GM23248 (cell line): ENCODE measurements at regions of chr9 and their contacts with region 1.

Region 1: DNA sequence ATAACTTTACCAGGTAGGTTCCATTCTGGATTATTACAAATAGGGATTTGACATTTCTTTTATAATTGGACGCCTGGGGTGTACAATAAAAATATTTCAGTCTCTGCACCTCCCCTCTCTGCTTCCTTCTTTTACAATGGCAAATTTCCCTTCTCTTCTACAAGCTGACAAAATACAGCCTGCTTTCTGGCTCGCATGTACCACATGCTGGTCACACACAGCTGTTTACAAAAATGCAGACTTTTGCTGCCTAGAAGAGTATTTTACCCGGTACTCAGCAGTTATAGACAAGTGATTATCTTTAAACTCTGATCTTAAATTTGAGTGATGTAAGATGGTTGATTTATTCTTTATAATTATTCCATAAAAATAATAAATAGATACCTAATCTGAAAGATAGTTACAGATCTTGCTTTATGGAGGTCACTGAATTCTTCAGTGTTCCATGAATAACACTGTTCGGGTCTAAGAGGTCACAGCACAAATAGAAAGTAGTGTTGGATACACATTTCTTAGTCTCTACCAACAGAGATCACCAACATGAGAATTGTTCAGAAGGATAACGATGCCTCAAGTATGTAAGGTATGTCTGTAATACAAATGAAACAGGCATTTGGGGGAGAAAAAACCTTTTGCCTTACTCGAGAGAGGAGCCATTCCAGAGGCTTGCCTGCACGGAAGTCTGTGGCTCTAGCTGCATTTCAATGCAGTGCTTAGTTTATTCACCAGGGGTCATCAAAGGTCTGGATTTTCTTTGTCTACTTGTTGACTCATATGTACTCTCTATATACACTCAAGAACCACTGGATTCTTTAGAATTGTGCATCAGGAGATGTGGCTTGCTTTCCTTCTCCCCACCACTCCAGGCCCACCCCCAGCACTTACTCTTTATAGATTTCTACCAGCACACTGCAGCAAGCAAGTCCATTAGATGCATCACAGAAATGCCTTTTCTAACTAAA is 206.6 kb upstream of the RFX3 start:
- DNase-seq: peak; percentile 88
- H3K4me3 ChIP-seq: peak overlapping the region; percentile 70
- H3K27ac ChIP-seq: peak overlapping the region; percentile 49
- H3K4me1 ChIP-seq: peaks cover 17% of the 10 kb centered on the region; the same call in 1 of the 2 replicates
- H3K27me3 ChIP-seq: no peaks in the 10 kb centered on the region

Region 2: DNA sequence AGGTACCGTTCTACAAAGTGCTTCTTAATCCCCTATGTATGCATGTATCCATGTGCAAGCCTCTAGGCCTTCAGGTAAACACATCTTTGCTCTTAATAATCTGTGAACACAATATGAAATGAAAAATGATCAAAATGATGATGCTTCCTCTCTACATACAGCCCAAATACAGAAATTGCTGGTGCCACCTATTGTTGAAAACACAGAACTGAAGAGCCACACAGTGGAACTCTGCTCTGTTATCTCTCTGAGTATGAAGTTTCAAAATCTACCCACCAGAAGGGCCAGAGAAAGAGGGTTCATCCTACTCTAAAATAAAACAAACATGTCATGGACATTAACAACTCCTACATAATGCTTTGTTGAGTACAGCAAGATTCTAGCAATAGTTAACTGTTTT is 496.2 kb after region 1 on chr9:
- in situ Hi-C with region 1: loop called (anchors 10 kb)
- DNase-seq: peak; percentile 63
- H3K4me3 ChIP-seq: no peak overlapping the region
- H3K27ac ChIP-seq: no peak overlapping the region
- H3K4me1 ChIP-seq: peaks cover 26% of the 10 kb centered on the region
- H3K27me3 ChIP-seq: no peaks in the 10 kb centered on the region

Region 3: DNA sequence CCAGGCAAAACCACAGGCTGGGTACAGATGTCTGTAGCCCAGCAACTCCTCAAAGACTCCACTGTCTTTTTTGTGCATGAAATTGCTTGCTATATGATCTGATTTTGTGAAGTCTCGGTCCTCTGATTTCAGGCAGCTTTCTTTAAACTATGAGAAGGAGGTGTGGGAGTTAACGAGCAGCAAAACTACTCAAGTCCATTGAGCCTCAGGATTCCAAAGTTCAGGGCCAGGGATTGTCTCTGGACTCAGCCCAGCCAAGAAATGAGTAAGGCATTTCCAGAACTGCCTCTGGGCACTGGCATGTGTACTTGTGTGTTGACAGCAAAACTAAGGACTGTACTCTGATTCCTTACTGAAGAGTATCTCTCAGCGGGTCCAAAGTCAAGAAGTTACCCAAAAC is 620.9 kb after region 1 on chr9:
- in situ Hi-C with region 1: loop called (anchors 10 kb)
- DNase-seq: peak; percentile 51
- H3K4me3 ChIP-seq: no peak overlapping the region
- H3K27ac ChIP-seq: no peak overlapping the region
- H3K4me1 ChIP-seq: 0 out of 2 replicates have a peak, but pooled peaks cover 5% of the 10 kb centered on the region
- H3K27me3 ChIP-seq: no peaks in the 10 kb centered on the region